GM12878 (cell line): ENCODE measurements at regions of chr1 and their contacts with region 1.

Region 1: DNA sequence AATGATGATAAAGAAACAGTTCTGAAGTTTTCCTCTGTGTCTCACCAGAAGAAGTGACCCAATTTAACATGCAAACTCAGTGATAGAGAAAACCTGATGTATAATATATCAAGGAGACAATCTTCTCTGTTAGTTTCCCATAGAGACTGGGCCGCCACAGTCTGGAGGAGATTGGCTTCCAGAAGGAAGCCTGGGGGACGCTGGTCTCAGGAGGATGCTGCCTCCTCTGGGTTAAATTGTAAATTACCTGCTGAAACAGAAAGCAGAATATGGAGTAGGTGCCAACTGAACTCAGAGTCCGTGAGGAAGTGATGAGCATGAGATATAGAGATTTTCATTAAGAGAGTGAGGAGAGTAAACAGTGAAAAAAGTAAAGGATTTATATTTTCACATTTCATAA is 15.8 kb downstream of the OR14I1 start:
- DNase-seq: peak; percentile 43
- ATAC-seq: peak; percentile 78
- H3K4me3 ChIP-seq: no peak overlapping the region
- H3K27ac ChIP-seq: no peak overlapping the region; the same call in 1 of the 2 replicates
- H3K4me1 ChIP-seq: peaks cover 3% of the 10 kb centered on the region; the same call in 1 of the 2 replicates
- H3K27me3 ChIP-seq: no peaks in the 10 kb centered on the region
- CTCF ChIP-seq: peak; percentile 45 to 70 (median 70); a peak in 5 of 6 replicates
- EP300 ChIP-seq: no peak
- POLR2A ChIP-seq: no peak
- RAD21 ChIP-seq: peak; percentile 95

Region 2: GRCh38 chr1:247936415-247936814 is 750.4 kb before region 1 on chr1:
- CTCF ChIA-PET with region 1: no interaction called
- POLR2A ChIA-PET with region 1: no interaction called
- RAD21 ChIA-PET with region 1: no interaction called
- SMC1A ChIA-PET with region 1: no interaction called
- in situ Hi-C with region 1: no loop called
- intact Hi-C with region 1: loop called (anchors 10 kb)
- DNase-seq: no peak
- ATAC-seq: no peak
- H3K4me3 ChIP-seq: no peak overlapping the region
- H3K27ac ChIP-seq: no peak overlapping the region
- H3K4me1 ChIP-seq: no peaks in the 10 kb centered on the region
- H3K27me3 ChIP-seq: no peaks in the 10 kb centered on the region
- CTCF ChIP-seq: no peak
- EP300 ChIP-seq: no peak
- POLR2A ChIP-seq: no peak
- RAD21 ChIP-seq: no peak

Region 3: GRCh38 chr1:248714248-248714647 is 27.4 kb after region 1 on chr1:
- CTCF ChIA-PET with region 1: no interaction called
- POLR2A ChIA-PET with region 1: no interaction called
- RAD21 ChIA-PET with region 1: no interaction called
- SMC1A ChIA-PET with region 1: no interaction called
- in situ Hi-C with region 1: no loop called
- intact Hi-C with region 1: no loop called
- DNase-seq: no peak
- ATAC-seq: no peak
- H3K4me3 ChIP-seq: no peak overlapping the region
- H3K27ac ChIP-seq: no peak overlapping the region
- H3K4me1 ChIP-seq: no peaks in the 10 kb centered on the region
- H3K27me3 ChIP-seq: no peaks in the 10 kb centered on the region
- CTCF ChIP-seq: no peak
- EP300 ChIP-seq: no peak
- POLR2A ChIP-seq: no peak
- RAD21 ChIP-seq: no peak

Region 4: DNA sequence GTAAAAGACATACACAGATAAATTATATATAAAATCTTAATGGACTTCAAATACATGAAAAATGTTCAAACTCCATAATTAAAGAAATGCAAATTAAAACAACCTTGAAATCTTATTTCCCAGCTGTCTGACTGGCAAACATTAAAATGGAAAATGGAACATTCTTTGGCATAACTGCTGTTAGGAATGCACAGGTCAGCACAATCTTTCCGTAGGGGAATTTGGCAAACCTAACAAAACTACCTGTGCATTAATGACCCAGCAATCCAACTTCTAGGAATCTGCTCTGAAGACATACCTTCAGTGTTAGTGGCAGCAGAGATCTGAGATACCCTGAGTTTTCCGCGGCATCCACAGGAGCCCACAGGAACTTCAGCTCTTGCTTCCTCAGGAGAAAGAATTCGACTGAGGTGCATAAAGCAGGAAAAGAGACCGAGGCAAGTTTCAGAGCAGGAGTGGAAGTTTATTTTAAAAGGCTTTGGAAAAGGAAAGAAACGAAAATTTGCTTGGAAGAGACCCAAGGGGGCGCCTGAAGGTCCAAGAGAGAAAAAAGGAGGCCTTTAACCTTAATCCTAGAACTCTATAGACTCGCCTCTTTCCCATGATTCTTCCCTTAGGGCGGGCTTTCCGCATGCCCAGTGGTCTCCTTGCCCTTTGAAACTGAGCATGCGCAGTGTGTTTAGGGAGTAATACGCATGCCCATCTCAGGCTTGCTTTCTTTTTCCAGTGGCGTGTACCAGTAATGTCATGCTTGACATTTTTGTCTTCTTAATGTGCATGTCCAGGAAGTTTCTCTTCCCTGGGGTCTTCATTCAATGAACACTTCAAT is 43.9 kb after region 1 on chr1:
- CTCF ChIA-PET with region 1: no interaction called
- POLR2A ChIA-PET with region 1: no interaction called
- RAD21 ChIA-PET with region 1: no interaction called
- SMC1A ChIA-PET with region 1: no interaction called
- in situ Hi-C with region 1: no loop called
- intact Hi-C with region 1: no loop called
- DNase-seq: no peak
- ATAC-seq: no peak
- H3K4me3 ChIP-seq: no peak overlapping the region
- H3K27ac ChIP-seq: no peak overlapping the region
- H3K4me1 ChIP-seq: no peaks in the 10 kb centered on the region
- H3K27me3 ChIP-seq: no peaks in the 10 kb centered on the region
- CTCF ChIP-seq: no peak
- EP300 ChIP-seq: no peak
- POLR2A ChIP-seq: no peak
- RAD21 ChIP-seq: no peak